ENCODE measurements at regions of chr7 and their contacts with region 1.

Region 1: GRCh38 chr7:140810830-140811556 is 113.7 kb downstream of the BRAF start:
- DNase-seq: peak; percentile 83
- ATAC-seq: peak; percentile 99
- H3K4me3 ChIP-seq: no peak overlapping the region
- H3K27ac ChIP-seq: no peak overlapping the region
- H3K4me1 ChIP-seq: no peaks in the 10 kb centered on the region
- H3K27me3 ChIP-seq: no peaks in the 10 kb centered on the region
- CTCF ChIP-seq: peak; percentile 76

Region 2: DNA sequence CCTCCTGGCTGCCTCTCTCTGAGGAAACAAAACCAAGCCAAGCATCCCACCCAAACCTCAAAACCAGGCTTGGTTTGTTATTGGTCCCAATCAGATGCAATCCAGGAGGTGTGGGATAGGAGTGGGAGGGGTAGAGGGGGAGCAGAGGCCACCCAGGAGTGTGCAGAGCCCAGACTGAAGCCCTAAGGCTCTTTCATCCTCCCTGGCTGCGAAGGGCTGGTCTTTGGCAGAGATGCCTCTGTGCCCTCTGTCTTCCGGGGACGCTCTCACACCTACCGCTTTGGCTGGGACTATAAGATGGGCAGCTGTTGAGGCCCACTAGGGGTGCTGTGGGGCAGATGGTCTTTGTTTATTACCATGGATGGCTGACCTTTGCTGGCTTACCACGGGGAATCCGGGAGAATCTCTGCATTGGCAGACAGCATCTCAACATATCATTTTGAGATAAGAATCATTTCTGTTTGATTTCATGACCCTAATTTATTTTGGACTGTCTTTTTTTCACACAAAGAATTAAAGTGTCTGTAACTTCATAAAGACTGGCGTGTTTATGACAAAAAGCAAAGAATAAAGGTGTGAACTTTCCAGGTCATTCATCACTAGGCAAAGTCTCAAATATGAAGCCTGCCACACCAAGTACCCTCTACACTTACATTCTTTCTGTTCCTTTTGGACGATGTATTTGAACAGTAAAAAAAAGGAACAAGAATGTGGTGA is 163.9 kb before region 1 on chr7:
- CTCF ChIA-PET with region 1: no interaction called
- POLR2A ChIA-PET with region 1: no interaction called
- intact Hi-C with region 1: no loop called
- DNase-seq: no peak
- ATAC-seq: peak; percentile 53; the same call in 1 of the 2 replicates
- H3K4me3 ChIP-seq: no peak overlapping the region
- H3K27ac ChIP-seq: no peak overlapping the region
- H3K4me1 ChIP-seq: peaks cover 17% of the 10 kb centered on the region
- H3K27me3 ChIP-seq: no peaks in the 10 kb centered on the region
- CTCF ChIP-seq: peak; percentile 62

Region 3: GRCh38 chr7:140673063-140673773 is 137.8 kb before region 1 on chr7:
- CTCF ChIA-PET with region 1: interaction called, 14 read pairs
- POLR2A ChIA-PET with region 1: no interaction called
- intact Hi-C with region 1: loop called (anchors 10 kb)
- DNase-seq: peak; percentile 82
- ATAC-seq: peak; percentile 71
- H3K4me3 ChIP-seq: peak overlapping the region; percentile 71
- H3K27ac ChIP-seq: peak overlapping the region; percentile 33; the same call in 1 of the 2 replicates
- H3K4me1 ChIP-seq: peaks cover 25% of the 10 kb centered on the region
- H3K27me3 ChIP-seq: no peaks in the 10 kb centered on the region
- CTCF ChIP-seq: no peak; the same call in 1 of the 2 replicates

Region 4: GRCh38 chr7:140914083-140914482 is 103.1 kb after region 1 on chr7:
- CTCF ChIA-PET with region 1: interaction called, 3 read pairs
- POLR2A ChIA-PET with region 1: no interaction called
- intact Hi-C with region 1: loop called (anchors 2 kb)
- DNase-seq: peak; percentile 20
- ATAC-seq: 0 out of 2 replicates have a peak, but pooled peaks have one; percentile 9
- H3K4me3 ChIP-seq: peak overlapping the region; percentile 30
- H3K27ac ChIP-seq: peak overlapping the region; percentile 83
- H3K4me1 ChIP-seq: peaks cover 30% of the 10 kb centered on the region
- H3K27me3 ChIP-seq: no peaks in the 10 kb centered on the region
- CTCF ChIP-seq: no peak

Region 5: DNA sequence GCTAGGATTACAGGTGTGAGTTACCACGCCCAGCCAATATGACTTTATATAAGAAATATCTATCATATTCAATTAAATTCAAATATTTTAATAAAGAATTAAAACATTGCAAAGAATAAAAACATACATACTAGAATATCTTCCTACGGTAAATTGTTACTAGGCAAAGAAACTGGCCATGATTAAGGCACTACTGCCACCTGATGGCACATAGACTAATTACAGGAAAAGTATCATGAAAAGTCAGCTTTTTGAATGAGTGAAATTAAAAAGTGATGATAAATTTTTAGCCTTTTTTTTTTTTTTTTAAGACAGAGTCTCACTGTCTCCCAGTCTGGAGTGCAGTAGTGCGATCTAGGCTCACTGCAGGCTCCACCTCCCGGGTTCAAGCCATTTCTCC is 172.8 kb after region 1 on chr7:
- CTCF ChIA-PET with region 1: interaction called, 36 read pairs
- POLR2A ChIA-PET with region 1: no interaction called
- intact Hi-C with region 1: loop called (anchors 1 kb)
- DNase-seq: peak; percentile 64
- ATAC-seq: no peak
- H3K4me3 ChIP-seq: no peak overlapping the region
- H3K27ac ChIP-seq: no peak overlapping the region
- H3K4me1 ChIP-seq: peaks cover 10% of the 10 kb centered on the region
- H3K27me3 ChIP-seq: no peaks in the 10 kb centered on the region
- CTCF ChIP-seq: peak; percentile 65

Region 6: GRCh38 chr7:141533149-141533949 is 722.4 kb after region 1 on chr7:
- CTCF ChIA-PET with region 1: interaction called, 18 read pairs
- POLR2A ChIA-PET with region 1: no interaction called
- intact Hi-C with region 1: loop called (anchors 10 kb)
- DNase-seq: peak; percentile 78
- ATAC-seq: peak; percentile 94
- H3K4me3 ChIP-seq: no peak overlapping the region
- H3K27ac ChIP-seq: no peak overlapping the region
- H3K4me1 ChIP-seq: no peaks in the 10 kb centered on the region
- H3K27me3 ChIP-seq: peaks cover 21% of the 10 kb centered on the region
- CTCF ChIP-seq: peak; percentile 96

Measured in PC-3 (cell line).